ENCODE measurements at regions of chr1 and their contacts with region 1.

Region 1: GRCh38 chr1:45490626-45491486 is at the start of gene TESK2:
- DNase-seq: peak; percentile 98 to 99
- H3K4me3 ChIP-seq: peak within 1 kb of the TSS; percentile 87 to 94
- H3K27ac ChIP-seq: peak within 1 kb of the TSS; percentile 59 to 79
- H3K4me1 ChIP-seq: peaks cover 3 to 9% of the 10 kb centered on the region in 2 donors
- H3K27me3 ChIP-seq: no peaks in the 10 kb centered on the region
- CTCF ChIP-seq: peak in 2 of 3 experiments; percentile 11 to 47
- total RNA-seq, gene TESK2: 0.32 TPM

Region 2: GRCh38 chr1:44714944-44715571 is 775.8 kb before region 1 on chr1:
- intact Hi-C with region 1: no loop called
- DNase-seq: peak in 1 of 2 donors; percentile 81
- H3K4me3 ChIP-seq: no peak overlapping the region
- H3K27ac ChIP-seq: no peak overlapping the region
- H3K4me1 ChIP-seq: no peaks in the 10 kb centered on the region
- H3K27me3 ChIP-seq: no peaks in the 10 kb centered on the region
- CTCF ChIP-seq: peak; percentile 66 to 89 (median 86)

Region 3: DNA sequence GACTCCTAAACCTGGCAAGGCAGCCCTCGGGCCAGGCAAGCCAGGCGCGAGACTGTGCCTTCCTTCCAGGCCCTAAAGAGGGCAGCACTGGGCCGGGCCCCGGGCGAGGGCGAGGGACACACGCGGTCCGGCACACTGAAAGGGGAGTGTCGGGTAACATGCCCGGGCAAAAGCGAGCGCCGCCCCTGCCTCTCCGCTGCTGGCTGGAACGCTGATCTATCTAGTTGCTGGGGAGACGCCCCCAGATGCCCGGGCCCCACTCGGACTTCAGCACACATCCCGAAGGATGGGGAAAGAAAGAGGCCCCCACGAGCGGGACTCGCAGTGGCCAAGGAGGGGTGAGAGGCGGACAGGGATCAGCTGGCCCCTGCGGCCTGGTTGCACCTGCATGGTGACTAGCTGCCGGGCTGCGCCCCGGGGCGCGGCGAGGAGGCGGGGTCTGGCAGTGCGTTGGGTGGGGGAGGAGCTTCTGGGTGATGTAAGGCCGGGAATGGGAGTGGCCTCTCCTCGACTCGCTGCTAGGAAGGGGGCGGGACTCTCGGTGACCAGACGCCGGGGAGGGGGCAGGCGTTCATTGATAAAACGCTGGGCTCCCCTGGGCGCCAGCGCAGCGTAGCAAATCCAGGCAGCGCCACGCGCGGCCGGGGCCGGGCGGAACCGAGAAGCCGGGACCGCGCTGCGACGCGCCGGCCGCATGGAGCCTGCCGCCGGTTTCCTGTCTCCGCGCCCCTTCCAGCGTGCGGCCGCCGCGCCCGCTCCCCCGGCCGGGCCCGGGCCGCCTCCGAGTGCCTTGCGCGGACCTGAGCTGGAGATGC is 690.9 kb before region 1 on chr1 and contains the start of gene PLK3:
- intact Hi-C with region 1: loop called (anchors 10 kb)
- DNase-seq: peak; percentile 94 to 99
- H3K4me3 ChIP-seq: peak within 1 kb of the TSS; percentile 85 to 91
- H3K27ac ChIP-seq: peak within 1 kb of the TSS; percentile 96 to 99
- H3K4me1 ChIP-seq: peaks cover 18 to 32% of the 10 kb centered on the region in 2 donors
- H3K27me3 ChIP-seq: no peaks in the 10 kb centered on the region
- CTCF ChIP-seq: peak; percentile 92 to 95 (median 94)
- total RNA-seq, gene PLK3: 107 TPM

Region 4: DNA sequence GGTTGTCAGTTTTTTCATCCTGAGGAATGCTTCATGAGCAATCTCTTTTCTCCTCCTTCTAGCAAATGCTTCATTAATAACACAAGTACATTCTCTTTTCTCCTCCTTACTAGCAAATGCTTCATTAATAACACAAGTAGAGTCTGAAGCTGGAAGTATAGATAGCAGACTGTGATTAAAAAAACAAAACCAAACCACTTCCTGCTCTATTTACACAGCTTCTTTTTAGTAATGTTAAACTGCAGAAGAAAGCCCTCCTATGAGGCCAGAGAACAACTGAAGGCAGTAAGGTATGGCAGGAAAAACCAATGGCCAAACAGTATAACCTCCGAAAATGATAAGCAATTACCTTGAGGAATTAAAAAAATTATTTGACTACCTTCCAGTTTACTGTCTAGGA is 374.5 kb before region 1 on chr1:
- intact Hi-C with region 1: no loop called
- DNase-seq: no peak
- H3K4me3 ChIP-seq: no peak overlapping the region
- H3K27ac ChIP-seq: no peak overlapping the region
- H3K4me1 ChIP-seq: no peaks in the 10 kb centered on the region
- H3K27me3 ChIP-seq: no peaks in the 10 kb centered on the region
- CTCF ChIP-seq: no peak

Region 5: GRCh38 chr1:45205910-45206721 is 284.7 kb before region 1 on chr1 and contains the start of gene ZSWIM5:
- intact Hi-C with region 1: loop called (anchors 5 kb)
- DNase-seq: peak in 1 of 2 donors; percentile 76
- H3K4me3 ChIP-seq: peak within 1 kb of the TSS; percentile 71 to 95
- H3K27ac ChIP-seq: peak within 1 kb of the TSS; percentile 73 to 82
- H3K4me1 ChIP-seq: peaks cover 0 to 7% of the 10 kb centered on the region in 2 donors
- H3K27me3 ChIP-seq: no peaks in the 10 kb centered on the region
- CTCF ChIP-seq: no peak
- total RNA-seq, gene ZSWIM5: 1.2 TPM

Region 6: GRCh38 chr1:45339789-45340570 is 150.9 kb before region 1 on chr1 and contains the starts of genes MUTYH and TOE1:
- intact Hi-C with region 1: loop called (anchors 1 kb)
- DNase-seq: peak; percentile 64 to 95
- H3K4me3 ChIP-seq: peak within 1 kb of the TSS; percentile 84 to 87
- H3K27ac ChIP-seq: peak within 1 kb of the TSS; percentile 98
- H3K4me1 ChIP-seq: peaks cover 11 to 19% of the 10 kb centered on the region in 2 donors
- H3K27me3 ChIP-seq: no peaks in the 10 kb centered on the region
- CTCF ChIP-seq: peak in 1 of 3 experiments; percentile 9
- total RNA-seq, gene MUTYH: 1.8 TPM
- total RNA-seq, gene TOE1: 6.9 TPM

Region 7: DNA sequence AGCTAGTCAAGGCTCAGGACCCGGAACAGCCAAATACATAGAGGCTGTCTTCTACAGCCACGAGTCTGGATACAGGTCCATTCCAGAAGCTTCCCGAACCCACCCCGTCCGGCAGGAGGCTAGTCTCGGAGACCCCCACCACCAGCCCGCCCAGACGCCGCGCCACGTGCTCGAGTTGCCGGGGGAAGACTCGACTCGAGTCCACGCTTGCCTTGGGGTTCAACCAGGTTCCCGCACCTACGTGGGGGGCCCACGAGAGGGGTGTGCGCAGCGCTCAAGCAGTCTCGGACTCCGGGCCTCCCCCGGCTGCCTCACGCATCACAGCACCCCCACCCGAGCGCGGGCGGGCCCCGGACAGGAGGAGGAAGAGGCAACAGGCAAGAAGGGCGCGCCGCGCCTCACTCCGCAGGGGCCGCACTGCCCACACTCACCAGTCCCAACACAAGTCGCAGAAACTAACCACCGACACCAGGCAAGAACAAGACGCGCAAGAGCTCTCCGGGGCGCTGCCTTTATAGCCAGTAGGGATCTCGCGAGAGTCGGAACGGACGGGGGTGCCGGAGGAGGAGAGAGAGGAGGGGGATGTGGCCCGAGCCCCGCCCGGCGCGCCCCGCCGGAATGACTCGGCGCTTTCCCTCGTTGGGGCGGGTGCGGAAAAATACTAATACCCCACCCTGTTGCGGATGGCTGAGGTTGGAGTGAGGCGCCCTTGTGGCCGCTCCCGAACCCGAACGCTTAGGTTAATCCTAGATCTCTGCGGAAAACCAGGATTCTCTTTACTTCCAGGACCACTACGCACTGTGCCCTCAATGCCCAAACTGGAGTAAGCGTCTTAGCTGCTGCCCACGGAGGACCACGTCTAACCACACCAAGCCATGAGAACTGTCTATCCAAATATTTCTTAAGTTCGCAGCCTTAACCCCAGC is 30.8 kb after region 1 on chr1 and contains the start of gene PRDX1:
- intact Hi-C with region 1: loop called (anchors 2 kb)
- DNase-seq: peak; percentile 87 to 98
- H3K4me3 ChIP-seq: peak within 1 kb of the TSS; percentile 60 to 93
- H3K27ac ChIP-seq: peak within 1 kb of the TSS; percentile 90 to 96
- H3K4me1 ChIP-seq: peaks cover 0 to 13% of the 10 kb centered on the region in 2 donors
- H3K27me3 ChIP-seq: no peaks in the 10 kb centered on the region
- CTCF ChIP-seq: peak in 1 of 3 experiments; percentile 7
- total RNA-seq, gene PRDX1: 245 TPM

Region 8: GRCh38 chr1:45686317-45687013 is 195.6 kb after region 1 on chr1 and contains the start of gene GPBP1L1:
- intact Hi-C with region 1: loop called (anchors 2 kb)
- DNase-seq: peak; percentile 84 to 98
- H3K4me3 ChIP-seq: peak within 1 kb of the TSS; percentile 71 to 89
- H3K27ac ChIP-seq: peak within 1 kb of the TSS; percentile 97
- H3K4me1 ChIP-seq: peaks cover 0 to 22% of the 10 kb centered on the region in 2 donors
- H3K27me3 ChIP-seq: no peaks in the 10 kb centered on the region
- CTCF ChIP-seq: no peak
- total RNA-seq, gene GPBP1L1: 161 TPM

Region 9: GRCh38 chr1:46132529-46133180 is 641.8 kb after region 1 on chr1 and contains the start of gene PIK3R3:
- intact Hi-C with region 1: loop called (anchors 10 kb)
- DNase-seq: peak; percentile 90 to 99
- H3K4me3 ChIP-seq: peak within 1 kb of the TSS; percentile 71 to 83
- H3K27ac ChIP-seq: peak within 1 kb of the TSS; percentile 90 to 97
- H3K4me1 ChIP-seq: peaks cover 5 to 16% of the 10 kb centered on the region in 2 donors
- H3K27me3 ChIP-seq: no peaks in the 10 kb centered on the region
- CTCF ChIP-seq: peak in 2 of 3 experiments; percentile 10 to 18
- total RNA-seq, gene PIK3R3: 33.1 TPM

Region 10: DNA sequence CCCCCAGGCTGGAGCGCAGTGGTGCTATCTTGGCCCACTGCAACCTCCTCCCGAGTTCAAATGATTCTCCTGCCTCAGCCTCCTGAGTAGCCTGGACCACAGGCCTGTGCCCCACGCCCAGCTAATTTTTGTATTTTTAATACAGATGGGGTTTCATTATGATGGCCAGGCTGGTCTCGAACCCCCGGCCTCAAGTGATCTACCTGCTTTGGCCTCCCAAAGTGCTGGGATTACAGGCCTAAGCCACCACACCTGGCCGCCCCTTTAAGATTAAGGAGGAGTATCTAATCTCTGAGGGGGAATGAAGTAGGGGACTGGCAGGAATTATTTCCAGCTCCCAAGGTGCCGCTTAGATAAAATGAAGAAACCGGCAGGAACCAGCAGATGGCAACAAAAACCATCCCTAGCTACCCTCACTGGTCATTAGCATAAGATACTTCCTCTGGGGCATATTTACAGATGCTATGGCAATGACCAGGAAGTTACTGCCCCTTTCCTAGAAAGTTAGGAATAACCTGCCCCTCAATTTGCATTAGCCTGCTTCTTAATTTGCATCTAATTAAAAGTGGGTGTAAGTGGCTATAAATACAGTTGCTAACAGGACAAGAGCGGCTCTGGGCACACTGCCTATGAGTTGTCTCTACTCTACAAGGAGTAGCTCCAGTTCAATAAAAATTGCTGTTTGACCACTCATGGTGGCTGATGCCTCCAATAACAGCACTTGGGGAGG is 842.6 kb after region 1 on chr1:
- intact Hi-C with region 1: no loop called
- DNase-seq: no peak
- H3K4me3 ChIP-seq: no peak overlapping the region
- H3K27ac ChIP-seq: no peak overlapping the region
- H3K4me1 ChIP-seq: no peaks in the 10 kb centered on the region
- H3K27me3 ChIP-seq: no peaks in the 10 kb centered on the region
- CTCF ChIP-seq: no peak

Measured in ascending aorta (tissue), 2 donors.